Mammary epithelial cell (primary cell): ENCODE measurements at regions of chr12 and their contacts with region 1.

Region 1: GRCh38 chr12:62006076-62006732 is 254.0 kb upstream of the USP15 start:
- DNase-seq: peak; percentile 11
- H3K4me3 ChIP-seq: no peak overlapping the region
- H3K27ac ChIP-seq: no peak overlapping the region
- H3K4me1 ChIP-seq: no peaks in the 10 kb centered on the region
- H3K27me3 ChIP-seq: no peaks in the 10 kb centered on the region
- CTCF ChIP-seq: peak; percentile 74 to 76

Region 2: GRCh38 chr12:60035835-60036234 is 1970.4 kb before region 1 on chr12:
- CTCF ChIA-PET with region 1: no interaction called
- dilution Hi-C with region 1: no loop called
- in situ Hi-C with region 1: no loop called
- intact Hi-C with region 1: no loop called
- DNase-seq: peak; percentile 27
- H3K4me3 ChIP-seq: no peak overlapping the region
- H3K27ac ChIP-seq: no peak overlapping the region
- H3K4me1 ChIP-seq: peaks cover 6% of the 10 kb centered on the region
- H3K27me3 ChIP-seq: no peaks in the 10 kb centered on the region
- CTCF ChIP-seq: no peak

Region 3: GRCh38 chr12:60684988-60685655 is 1321.1 kb before region 1 on chr12:
- CTCF ChIA-PET with region 1: no interaction called
- dilution Hi-C with region 1: no loop called
- in situ Hi-C with region 1: loop called in 1 of 2 experiments (anchors 25 kb)
- intact Hi-C with region 1: no loop called
- DNase-seq: no peak
- H3K4me3 ChIP-seq: no peak overlapping the region
- H3K27ac ChIP-seq: no peak overlapping the region
- H3K4me1 ChIP-seq: no peaks in the 10 kb centered on the region
- H3K27me3 ChIP-seq: no peaks in the 10 kb centered on the region
- CTCF ChIP-seq: peak; percentile 40 to 65

Region 4: DNA sequence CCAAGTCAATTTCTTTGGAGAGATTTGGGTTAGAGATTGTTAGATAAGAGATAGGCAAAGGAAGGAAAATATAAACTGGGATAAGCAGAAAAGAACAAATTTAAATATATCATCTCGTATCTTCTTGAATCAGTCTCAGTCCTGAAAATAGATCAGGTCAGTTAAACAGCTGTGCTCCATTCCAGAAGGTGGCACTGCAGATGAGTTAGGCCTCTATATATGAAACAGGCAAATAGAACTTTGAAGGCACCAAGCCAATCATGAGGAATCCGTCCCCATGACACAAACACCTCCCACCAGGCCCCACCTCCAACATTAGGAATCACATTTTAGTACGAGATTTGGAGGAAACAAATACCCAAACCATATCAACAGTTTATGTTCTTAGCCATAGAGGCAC is 351.5 kb before region 1 on chr12:
- CTCF ChIA-PET with region 1: no interaction called
- dilution Hi-C with region 1: no loop called
- in situ Hi-C with region 1: no loop called
- intact Hi-C with region 1: loop called (anchors 5 kb)
- DNase-seq: peak; percentile 17
- H3K4me3 ChIP-seq: no peak overlapping the region
- H3K27ac ChIP-seq: no peak overlapping the region
- H3K4me1 ChIP-seq: no peaks in the 10 kb centered on the region
- H3K27me3 ChIP-seq: no peaks in the 10 kb centered on the region
- CTCF ChIP-seq: peak; percentile 15 to 38

Region 5: DNA sequence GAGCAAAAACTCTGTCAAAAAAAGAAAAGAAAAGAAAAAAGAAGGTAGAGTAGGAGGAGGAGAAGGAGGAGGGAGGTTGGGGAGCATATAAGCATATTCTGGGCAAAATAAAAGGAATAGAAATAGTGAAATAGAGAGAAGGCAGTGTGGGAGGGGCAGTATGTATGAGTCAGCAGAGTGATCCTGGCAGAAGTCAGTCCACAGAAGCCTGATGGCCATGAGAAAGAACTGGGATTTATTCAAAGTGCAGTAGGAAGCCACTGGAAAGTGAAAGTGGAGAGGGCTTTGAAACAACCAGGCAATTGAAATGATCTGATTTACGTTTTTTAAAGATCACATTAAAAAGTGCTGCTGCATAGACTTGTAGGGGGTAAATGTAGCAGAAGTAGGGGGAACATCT is 114.6 kb before region 1 on chr12:
- CTCF ChIA-PET with region 1: no interaction called
- dilution Hi-C with region 1: no loop called
- in situ Hi-C with region 1: no loop called
- intact Hi-C with region 1: no loop called
- DNase-seq: no peak
- H3K4me3 ChIP-seq: no peak overlapping the region
- H3K27ac ChIP-seq: no peak overlapping the region
- H3K4me1 ChIP-seq: no peaks in the 10 kb centered on the region
- H3K27me3 ChIP-seq: peaks cover 3% of the 10 kb centered on the region
- CTCF ChIP-seq: no peak

Region 6: DNA sequence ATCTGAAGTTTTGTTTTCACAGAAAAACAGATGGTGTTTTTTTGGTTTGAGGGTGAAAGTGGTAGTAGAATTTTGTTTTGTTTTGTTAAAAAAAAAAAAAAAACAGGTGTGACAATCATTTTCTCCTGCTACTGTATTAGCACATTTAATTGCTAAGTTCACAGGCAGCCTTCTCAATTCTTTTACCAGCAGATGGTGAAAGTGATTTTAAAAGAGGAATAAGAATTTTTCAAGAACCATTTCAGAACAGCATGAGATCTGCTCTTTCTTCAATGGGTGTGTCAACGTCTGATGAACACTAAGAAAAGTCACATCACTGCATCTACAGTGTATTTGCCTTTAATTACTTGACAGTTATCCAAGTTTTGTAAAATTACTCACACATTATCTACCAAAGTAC is 49.7 kb before region 1 on chr12:
- CTCF ChIA-PET with region 1: no interaction called
- dilution Hi-C with region 1: no loop called
- in situ Hi-C with region 1: no loop called
- intact Hi-C with region 1: no loop called
- DNase-seq: no peak
- H3K4me3 ChIP-seq: no peak overlapping the region
- H3K27ac ChIP-seq: no peak overlapping the region
- H3K4me1 ChIP-seq: no peaks in the 10 kb centered on the region
- H3K27me3 ChIP-seq: no peaks in the 10 kb centered on the region
- CTCF ChIP-seq: no peak

Region 7: GRCh38 chr12:61987173-61987572 is 19.0 kb before region 1 on chr12:
- CTCF ChIA-PET with region 1: no interaction called
- dilution Hi-C with region 1: no loop called
- in situ Hi-C with region 1: no loop called
- intact Hi-C with region 1: no loop called
- DNase-seq: no peak
- H3K4me3 ChIP-seq: no peak overlapping the region
- H3K27ac ChIP-seq: no peak overlapping the region
- H3K4me1 ChIP-seq: no peaks in the 10 kb centered on the region
- H3K27me3 ChIP-seq: no peaks in the 10 kb centered on the region
- CTCF ChIP-seq: no peak

Region 8: DNA sequence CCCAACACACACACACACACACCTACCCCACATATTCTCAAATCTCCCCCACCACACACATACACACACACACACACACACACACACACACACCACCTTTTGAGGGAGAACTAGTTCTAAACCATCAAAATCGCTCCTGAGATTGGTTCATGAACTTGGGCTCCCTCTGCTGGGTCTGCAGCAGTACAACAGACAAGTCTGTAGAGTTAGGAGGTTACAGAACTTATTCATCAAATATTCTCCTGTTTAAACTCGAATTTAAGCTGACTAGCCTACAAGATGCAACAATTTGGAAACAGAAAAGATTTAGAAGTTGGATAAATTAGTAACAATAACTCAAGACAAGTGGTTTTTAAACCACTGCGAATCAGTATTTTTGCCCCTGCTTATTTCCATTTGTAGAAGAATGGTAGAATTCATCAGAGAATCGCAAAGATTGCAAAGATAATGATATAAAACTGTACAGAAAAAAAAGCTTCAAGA is 117.6 kb after region 1 on chr12:
- CTCF ChIA-PET with region 1: no interaction called
- dilution Hi-C with region 1: no loop called
- in situ Hi-C with region 1: no loop called
- intact Hi-C with region 1: loop called (anchors 5 kb)
- DNase-seq: peak; percentile 38
- H3K4me3 ChIP-seq: no peak overlapping the region
- H3K27ac ChIP-seq: no peak overlapping the region
- H3K4me1 ChIP-seq: peaks cover 13% of the 10 kb centered on the region
- H3K27me3 ChIP-seq: peaks cover 2% of the 10 kb centered on the region
- CTCF ChIP-seq: peak; percentile 80 to 83